ENCODE measurements at regions of chr1 and their contacts with region 1.

Region 1: GRCh38 chr1:241579426-241579825 is 47.2 kb downstream of the KMO start:
- DNase-seq: no peak
- ATAC-seq: no peak
- H3K4me3 ChIP-seq: no peak overlapping the region
- H3K27ac ChIP-seq: no peak overlapping the region
- H3K4me1 ChIP-seq: no peaks in the 10 kb centered on the region
- H3K27me3 ChIP-seq: no peaks in the 10 kb centered on the region
- CTCF ChIP-seq: no peak
- POLR2A ChIP-seq: no peak
- RAD21 ChIP-seq: no peak

Region 2: GRCh38 chr1:241167121-241167619 is 412.3 kb before region 1 on chr1:
- CTCF ChIA-PET with region 1: no interaction called
- POLR2A ChIA-PET with region 1: no interaction called
- dilution Hi-C with region 1: no loop called
- in situ Hi-C with region 1: no loop called
- intact Hi-C with region 1: no loop called
- DNase-seq: no peak
- ATAC-seq: no peak
- H3K4me3 ChIP-seq: no peak overlapping the region
- H3K27ac ChIP-seq: no peak overlapping the region
- H3K4me1 ChIP-seq: no peaks in the 10 kb centered on the region
- H3K27me3 ChIP-seq: no peaks in the 10 kb centered on the region
- CTCF ChIP-seq: no peak
- POLR2A ChIP-seq: no peak
- RAD21 ChIP-seq: no peak

Region 3: DNA sequence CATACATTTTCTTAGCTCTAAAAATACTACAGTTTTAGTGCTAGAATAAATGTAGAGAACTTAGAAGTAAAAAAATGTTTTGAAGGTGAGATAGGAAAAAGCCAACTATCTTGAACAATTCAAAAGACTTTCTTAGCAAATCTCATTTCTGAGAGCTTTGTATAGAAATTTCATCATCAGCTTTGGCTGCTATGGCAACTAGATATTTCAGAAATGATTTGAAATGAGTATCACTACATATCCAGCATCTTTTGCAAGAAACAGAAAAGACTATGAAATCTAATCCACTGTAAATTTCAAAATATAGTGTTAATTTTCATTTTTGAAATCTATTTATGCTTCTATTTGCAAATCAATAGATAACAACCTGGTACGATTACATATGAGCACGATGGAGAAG is 280.1 kb before region 1 on chr1:
- CTCF ChIA-PET with region 1: no interaction called
- POLR2A ChIA-PET with region 1: no interaction called
- dilution Hi-C with region 1: no loop called
- in situ Hi-C with region 1: no loop called
- intact Hi-C with region 1: no loop called
- DNase-seq: no peak
- ATAC-seq: no peak
- H3K4me3 ChIP-seq: no peak overlapping the region
- H3K27ac ChIP-seq: no peak overlapping the region
- H3K4me1 ChIP-seq: no peaks in the 10 kb centered on the region
- H3K27me3 ChIP-seq: no peaks in the 10 kb centered on the region
- CTCF ChIP-seq: no peak
- POLR2A ChIP-seq: no peak
- RAD21 ChIP-seq: no peak

Region 4: GRCh38 chr1:241600496-241600901 is 21.1 kb after region 1 on chr1:
- CTCF ChIA-PET with region 1: no interaction called
- POLR2A ChIA-PET with region 1: no interaction called
- dilution Hi-C with region 1: no loop called
- in situ Hi-C with region 1: no loop called
- intact Hi-C with region 1: loop called (anchors 1 kb)
- DNase-seq: peak; percentile 66
- ATAC-seq: peak; percentile 72
- H3K4me3 ChIP-seq: no peak overlapping the region
- H3K27ac ChIP-seq: no peak overlapping the region
- H3K4me1 ChIP-seq: peaks cover 3% of the 10 kb centered on the region; the same call in 1 of the 2 replicates
- H3K27me3 ChIP-seq: no peaks in the 10 kb centered on the region
- CTCF ChIP-seq: no peak
- POLR2A ChIP-seq: no peak
- RAD21 ChIP-seq: no peak

Measured in IMR-90 (cell line).